ENCODE measurements at regions of chr6 and their contacts with region 1.

Region 1: GRCh38 chr6:150685860-150686259 is 86.2 kb downstream of the PLEKHG1 start:
- DNase-seq: no peak
- ATAC-seq: no peak

Region 2: DNA sequence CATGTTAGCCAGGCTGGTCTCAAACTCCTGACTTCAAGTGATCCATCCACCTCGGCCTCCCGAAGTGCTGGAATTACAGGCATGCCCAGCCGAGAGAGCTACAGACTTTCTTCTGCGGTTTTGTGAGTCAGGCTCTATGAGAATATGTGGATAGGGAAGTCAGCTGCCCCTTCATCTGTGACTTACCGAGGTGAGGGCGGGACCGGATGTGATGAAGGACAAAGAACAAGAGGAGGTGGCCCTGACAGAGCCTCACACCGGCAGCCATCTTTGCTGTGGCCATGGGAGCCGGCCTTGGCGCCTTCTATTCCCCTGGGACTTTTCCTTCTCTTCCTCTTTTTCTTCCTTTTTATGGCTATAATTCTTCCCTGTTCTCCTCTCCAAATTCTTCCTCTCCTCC is 250.0 kb before region 1 on chr6:
- intact Hi-C with region 1: no loop called
- DNase-seq: no peak
- ATAC-seq: no peak

Region 3: GRCh38 chr6:150600301-150601017 is 85.4 kb before region 1 on chr6:
- intact Hi-C with region 1: loop called (anchors 5 kb)
- DNase-seq: peak; percentile 74
- ATAC-seq: peak; percentile 51

Region 4: GRCh38 chr6:150652848-150653613 is 32.8 kb before region 1 on chr6:
- intact Hi-C with region 1: loop called (anchors 5 kb)
- DNase-seq: no peak
- ATAC-seq: no peak